Ascending aorta (tissue), 2 donors: ENCODE measurements at regions of chrX and their contacts with region 1.

Region 1: GRCh38 chrX:119791438-119792231 is at the start of gene RPL39:
- DNase-seq: peak; percentile 45 to 88
- H3K4me3 ChIP-seq: peak within 1 kb of the TSS; percentile 59 to 82
- H3K27ac ChIP-seq: peak within 1 kb of the TSS; percentile 88 to 95
- H3K4me1 ChIP-seq: peaks cover 2 to 13% of the 10 kb centered on the region in 2 donors
- H3K27me3 ChIP-seq: no peaks in the 10 kb centered on the region
- CTCF ChIP-seq: no peak
- total RNA-seq, gene RPL39: 2,929 TPM

Region 2: DNA sequence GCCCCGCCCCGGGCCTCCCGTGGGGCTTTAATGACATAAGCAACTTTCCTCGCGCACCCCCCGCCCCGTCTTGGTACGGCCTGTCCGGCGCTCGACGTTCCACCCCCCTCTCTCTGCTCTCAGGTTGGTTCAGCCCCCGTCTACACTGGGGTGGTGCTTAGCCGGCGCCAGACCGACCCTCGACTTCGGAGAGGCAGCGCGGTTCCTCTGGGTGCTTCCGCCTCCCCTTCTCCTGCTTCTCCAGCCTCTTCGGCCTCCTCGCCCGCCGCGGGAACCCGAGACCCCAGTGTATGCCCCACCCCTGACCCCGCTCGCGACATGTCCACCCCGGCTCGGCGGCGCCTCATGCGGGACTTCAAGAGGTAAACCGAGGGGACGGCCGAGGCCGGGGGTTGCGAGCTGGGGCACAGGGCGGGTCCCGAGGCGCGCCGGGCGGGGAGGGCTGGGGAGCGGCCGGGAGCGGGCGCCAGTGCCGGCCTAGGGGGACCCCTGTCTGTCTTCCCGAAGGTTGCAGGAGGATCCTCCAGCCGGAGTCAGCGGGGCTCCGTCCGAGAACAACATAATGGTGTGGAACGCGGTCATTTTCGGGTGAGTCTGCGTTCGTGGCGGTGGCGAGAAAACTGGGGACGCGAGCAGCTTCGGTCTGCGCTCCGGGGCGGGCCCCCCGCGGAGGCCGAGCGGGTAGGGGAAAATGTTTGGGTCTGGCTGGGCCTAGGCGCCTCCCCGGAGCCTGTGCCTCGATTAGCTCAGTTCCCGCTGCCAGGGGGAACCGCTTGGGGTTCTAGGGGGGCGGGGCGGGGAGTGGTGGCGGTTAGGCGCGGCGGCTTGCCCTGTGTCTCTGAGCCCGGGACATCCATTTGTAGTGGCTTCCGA is 217.0 kb before region 1 on chrX and contains the start of gene UBE2A:
- intact Hi-C with region 1: loop called (anchors 5 kb)
- DNase-seq: peak; percentile 45 to 93
- H3K4me3 ChIP-seq: peak within 1 kb of the TSS; percentile 64 to 92
- H3K27ac ChIP-seq: peak within 1 kb of the TSS; percentile 94 to 95
- H3K4me1 ChIP-seq: peaks cover 0 to 5% of the 10 kb centered on the region in 2 donors
- H3K27me3 ChIP-seq: no peaks in the 10 kb centered on the region
- CTCF ChIP-seq: peak; percentile 7 to 50 (median 30)
- total RNA-seq, gene UBE2A: 28.4 TPM

Region 3: GRCh38 chrX:119606280-119607015 is 185.2 kb before region 1 on chrX and contains the start of gene NKRF:
- intact Hi-C with region 1: loop called (anchors 5 kb)
- DNase-seq: peak; percentile 68 to 95
- H3K4me3 ChIP-seq: peak within 1 kb of the TSS; percentile 63 to 77
- H3K27ac ChIP-seq: peak within 1 kb of the TSS; percentile 69 to 79
- H3K4me1 ChIP-seq: no peaks in the 10 kb centered on the region
- H3K27me3 ChIP-seq: no peaks in the 10 kb centered on the region
- CTCF ChIP-seq: no peak
- total RNA-seq, gene NKRF: 2.8 TPM

Region 4: DNA sequence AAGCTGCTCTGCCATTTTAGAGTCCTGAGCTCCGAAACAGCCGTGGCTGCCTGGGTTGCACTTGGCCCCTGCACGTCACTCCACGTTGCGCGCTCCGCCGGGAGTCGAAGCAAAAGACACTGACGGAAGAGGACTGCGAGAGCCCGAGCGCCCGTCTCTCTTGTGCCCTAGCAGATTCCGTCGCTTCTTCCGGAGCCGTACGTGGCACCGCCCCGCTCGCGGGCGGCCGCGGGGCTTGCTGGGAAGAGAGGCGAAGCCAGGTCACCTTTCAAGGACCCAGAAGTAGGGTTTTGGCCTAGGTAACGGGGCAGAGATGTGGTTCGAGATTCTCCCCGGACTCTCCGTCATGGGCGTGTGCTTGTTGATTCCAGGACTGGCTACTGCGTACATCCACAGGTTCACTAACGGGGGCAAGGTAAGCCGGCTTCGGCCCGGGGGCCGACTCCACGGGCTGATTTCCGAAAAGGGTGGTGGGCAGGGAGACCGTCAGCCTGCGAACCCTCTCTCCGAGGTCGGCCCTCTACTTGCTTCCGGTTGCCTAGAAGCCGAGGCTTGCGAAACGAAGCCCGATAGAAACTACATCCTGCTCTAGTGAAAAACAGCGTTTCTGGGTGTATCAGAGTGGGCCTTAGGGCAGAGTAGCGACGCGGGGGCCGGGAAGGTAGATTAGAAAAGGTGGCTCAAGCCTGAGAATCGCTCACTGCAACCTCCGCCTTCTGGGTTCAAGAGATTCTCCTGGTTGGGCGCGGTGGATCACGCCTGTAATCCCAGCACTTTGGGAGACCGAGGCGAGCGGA is 80.2 kb after region 1 on chrX and contains the starts of genes NDUFA1 and RNF113A:
- intact Hi-C with region 1: loop called (anchors 5 kb)
- DNase-seq: peak; percentile 31 to 89
- H3K4me3 ChIP-seq: peak within 1 kb of the TSS; percentile 54 to 66
- H3K27ac ChIP-seq: peak within 1 kb of the TSS; percentile 90 to 93
- H3K4me1 ChIP-seq: peaks cover 0 to 5% of the 10 kb centered on the region in 2 donors
- H3K27me3 ChIP-seq: no peaks in the 10 kb centered on the region
- CTCF ChIP-seq: no peak
- total RNA-seq, gene NDUFA1: 24.5 TPM
- total RNA-seq, gene RNF113A: 8.8 TPM